Endothelial cell of umbilical vein (primary cell): ENCODE measurements at regions of chr15 and their contacts with region 1.

Region 1: GRCh38 chr15:62572797-62573196 is 407.7 kb upstream of the C2CD4B start:
- DNase-seq: no peak
- H3K4me3 ChIP-seq: no peak overlapping the region
- H3K27ac ChIP-seq: no peak overlapping the region
- H3K4me1 ChIP-seq: no peaks in the 10 kb centered on the region
- H3K27me3 ChIP-seq: no peaks in the 10 kb centered on the region
- CTCF ChIP-seq: no peak
- POLR2A ChIP-seq: no peak

Region 2: GRCh38 chr15:62549345-62549970 is 23.3 kb before region 1 on chr15:
- CTCF ChIA-PET with region 1: interaction called, 11 read pairs
- POLR2A ChIA-PET with region 1: no interaction called
- dilution Hi-C with region 1: no loop called
- intact Hi-C with region 1: no loop called
- DNase-seq: peak; percentile 31
- H3K4me3 ChIP-seq: no peak overlapping the region
- H3K27ac ChIP-seq: no peak overlapping the region
- H3K4me1 ChIP-seq: no peaks in the 10 kb centered on the region
- H3K27me3 ChIP-seq: peaks cover 0 to 3% of the 10 kb centered on the region in 2 experiments
- CTCF ChIP-seq: peak; percentile 34 to 60
- POLR2A ChIP-seq: no peak

Region 3: GRCh38 chr15:62606376-62607113 is 33.7 kb after region 1 on chr15:
- CTCF ChIA-PET with region 1: no interaction called
- POLR2A ChIA-PET with region 1: no interaction called
- dilution Hi-C with region 1: no loop called
- intact Hi-C with region 1: no loop called
- DNase-seq: no peak
- H3K4me3 ChIP-seq: no peak overlapping the region
- H3K27ac ChIP-seq: no peak overlapping the region
- H3K4me1 ChIP-seq: no peaks in the 10 kb centered on the region
- H3K27me3 ChIP-seq: no peaks in the 10 kb centered on the region
- CTCF ChIP-seq: no peak
- POLR2A ChIP-seq: no peak